PC-3 (cell line): ENCODE measurements at regions of chr17 and their contacts with region 1.

Region 1: DNA sequence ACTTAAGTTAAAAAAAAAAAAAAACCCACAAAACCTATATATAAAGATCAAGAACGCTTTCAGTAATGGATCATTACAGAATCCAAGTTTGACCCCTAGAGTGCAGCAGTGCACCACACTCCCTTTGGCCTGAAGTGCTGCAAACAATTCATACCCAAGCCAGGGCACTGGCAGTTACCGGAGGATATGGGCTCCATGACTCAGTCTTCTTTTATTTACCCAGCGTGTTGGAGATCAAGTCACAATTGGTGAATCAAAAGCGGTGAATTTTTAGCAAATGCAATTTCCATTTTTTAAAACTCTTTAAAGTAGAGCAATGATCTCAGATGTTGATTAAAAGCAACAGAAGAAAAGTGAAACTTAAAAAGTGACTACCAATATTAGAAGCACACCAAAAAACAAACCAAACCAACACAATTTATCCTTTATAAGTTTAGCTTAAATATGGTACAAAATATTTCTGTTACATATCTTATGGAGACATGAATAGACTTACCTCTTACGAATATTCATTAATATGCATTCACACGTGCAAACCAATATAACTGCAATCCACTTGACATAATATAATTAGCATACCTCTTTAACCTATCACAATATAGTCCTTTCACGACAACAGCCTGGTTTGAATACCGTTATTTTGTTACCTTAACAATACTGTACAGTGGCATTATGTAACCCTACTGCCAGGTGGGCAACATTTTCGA is 46.3 kb downstream of the ZNF652 start:
- DNase-seq: peak; percentile 98
- ATAC-seq: peak; percentile 96
- H3K4me3 ChIP-seq: peak overlapping the region; percentile 11; the same call in 1 of the 2 replicates
- H3K27ac ChIP-seq: peak overlapping the region; percentile 21
- H3K4me1 ChIP-seq: peaks cover 14% of the 10 kb centered on the region
- H3K27me3 ChIP-seq: no peaks in the 10 kb centered on the region
- CTCF ChIP-seq: peak; percentile 98

Region 2: DNA sequence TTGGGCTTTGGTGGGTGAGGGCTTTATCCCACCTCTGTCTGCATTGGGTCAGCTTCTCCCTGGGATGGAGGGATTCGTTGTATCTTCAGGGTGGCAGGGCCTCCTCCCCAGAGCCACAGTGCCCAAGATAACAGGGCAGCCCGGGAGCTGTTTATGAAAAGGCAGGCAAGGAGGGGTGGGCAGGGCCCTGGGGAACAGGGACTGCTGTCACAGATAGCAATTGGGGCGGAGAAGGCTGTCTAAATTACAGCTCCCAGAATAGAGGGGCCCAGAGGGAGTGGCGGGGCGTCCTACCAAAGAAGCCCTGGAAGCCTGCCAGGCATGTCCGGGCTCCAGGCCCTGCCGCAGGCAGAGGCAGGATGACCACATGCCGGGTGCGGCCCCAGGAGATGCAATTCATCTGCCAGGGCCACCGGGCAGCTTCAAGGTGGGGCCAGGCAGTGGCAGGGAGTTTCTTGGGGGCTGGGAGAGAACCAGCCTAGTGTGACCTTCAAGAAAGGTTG is 66.4 kb before region 1 on chr17:
- CTCF ChIA-PET with region 1: no interaction called
- POLR2A ChIA-PET with region 1: no interaction called
- intact Hi-C with region 1: no loop called
- DNase-seq: peak; percentile 32
- ATAC-seq: peak; percentile 41
- H3K4me3 ChIP-seq: no peak overlapping the region
- H3K27ac ChIP-seq: no peak overlapping the region
- H3K4me1 ChIP-seq: peaks cover 6% of the 10 kb centered on the region; the same call in 1 of the 2 replicates
- H3K27me3 ChIP-seq: no peaks in the 10 kb centered on the region
- CTCF ChIP-seq: no peak

Region 3: DNA sequence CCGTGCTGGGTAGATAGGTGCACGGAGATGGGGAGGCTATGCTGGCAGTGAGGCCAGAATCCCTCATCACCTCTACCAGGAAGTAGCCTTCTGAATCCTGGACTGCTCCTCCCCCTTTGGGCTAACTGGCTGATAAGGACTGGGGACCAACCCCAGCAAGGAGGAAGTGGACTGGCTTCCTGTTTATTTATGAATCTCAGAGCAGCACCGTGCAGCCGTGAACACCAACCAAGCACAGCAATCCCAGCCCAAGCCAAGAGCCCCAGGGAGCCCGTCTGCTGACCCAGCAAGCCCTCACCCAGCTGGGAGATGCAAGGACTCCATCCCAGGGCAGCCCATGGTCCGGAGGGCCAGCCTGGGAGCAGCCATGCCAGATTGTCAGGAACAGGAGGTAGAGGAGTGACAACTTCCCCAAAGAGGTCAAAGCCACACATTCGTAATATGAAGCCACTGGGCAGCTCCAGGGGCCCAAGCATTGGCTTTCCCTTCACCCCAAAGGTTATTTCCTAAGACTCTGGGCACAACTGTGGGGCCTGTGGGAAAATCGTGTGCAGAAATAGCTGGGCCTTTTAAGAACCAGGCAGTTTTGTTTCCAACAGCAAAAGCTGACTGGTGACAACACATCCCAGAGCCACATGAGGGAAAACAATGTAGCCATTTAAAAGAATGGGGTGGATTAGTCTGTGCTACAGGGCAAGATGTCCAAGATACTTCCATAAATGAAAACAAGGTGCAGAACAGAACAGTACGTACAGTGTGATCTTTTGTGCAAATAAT is 75.0 kb after region 1 on chr17:
- CTCF ChIA-PET with region 1: interaction called, 5 read pairs
- POLR2A ChIA-PET with region 1: no interaction called
- intact Hi-C with region 1: loop called (anchors 1 kb)
- DNase-seq: no peak
- ATAC-seq: no peak
- H3K4me3 ChIP-seq: no peak overlapping the region
- H3K27ac ChIP-seq: no peak overlapping the region
- H3K4me1 ChIP-seq: peaks cover 18% of the 10 kb centered on the region
- H3K27me3 ChIP-seq: no peaks in the 10 kb centered on the region
- CTCF ChIP-seq: no peak